WTC11 (cell line): ENCODE measurements at regions of chr7 and their contacts with region 1.

Region 1: GRCh38 chr7:130205084-130205947 is at the start of gene TMEM209:
- DNase-seq: peak; percentile 97
- ATAC-seq: peak; percentile 98
- H3K4me3 Mint-ChIP-seq: peak within 1 kb of the TSS; percentile 92
- H3K27ac Mint-ChIP-seq: peak within 1 kb of the TSS; percentile 98
- H3K4me1 Mint-ChIP-seq: 0 out of 2 replicates have a peak, but pooled peaks cover 3% of the 10 kb centered on the region
- H3K27me3 Mint-ChIP-seq: no peaks in the 10 kb centered on the region
- CTCF ChIP-seq: no peak
- total RNA-seq, gene TMEM209: 21.0 to 25.8 TPM (median 23.5 TPM) in 3 replicates

Region 2: GRCh38 chr7:130069978-130070860 is 135.1 kb before region 1 on chr7 and contains the start of gene KLHDC10:
- CTCF ChIA-PET with region 1: interaction called, 13 read pairs
- POLR2A ChIA-PET with region 1: interaction called, 4 read pairs
- DNase-seq: peak; percentile 95
- ATAC-seq: peak; percentile 92
- H3K4me3 Mint-ChIP-seq: peak within 1 kb of the TSS; percentile 93
- H3K27ac Mint-ChIP-seq: peak within 1 kb of the TSS; percentile 94
- H3K4me1 Mint-ChIP-seq: peaks cover 25% of the 10 kb centered on the region
- H3K27me3 Mint-ChIP-seq: no peaks in the 10 kb centered on the region
- CTCF ChIP-seq: no peak
- total RNA-seq, gene KLHDC10: 14.4 to 16.5 TPM (median 15.0 TPM) in 3 replicates

Region 3: GRCh38 chr7:130135208-130136205 is 69.8 kb before region 1 on chr7:
- CTCF ChIA-PET with region 1: no interaction called
- POLR2A ChIA-PET with region 1: no interaction called
- DNase-seq: no peak
- ATAC-seq: no peak
- H3K4me3 Mint-ChIP-seq: no peak overlapping the region
- H3K27ac Mint-ChIP-seq: no peak overlapping the region
- H3K4me1 Mint-ChIP-seq: peaks cover 24% of the 10 kb centered on the region
- H3K27me3 Mint-ChIP-seq: peaks cover 8% of the 10 kb centered on the region
- CTCF ChIP-seq: no peak

Region 4: DNA sequence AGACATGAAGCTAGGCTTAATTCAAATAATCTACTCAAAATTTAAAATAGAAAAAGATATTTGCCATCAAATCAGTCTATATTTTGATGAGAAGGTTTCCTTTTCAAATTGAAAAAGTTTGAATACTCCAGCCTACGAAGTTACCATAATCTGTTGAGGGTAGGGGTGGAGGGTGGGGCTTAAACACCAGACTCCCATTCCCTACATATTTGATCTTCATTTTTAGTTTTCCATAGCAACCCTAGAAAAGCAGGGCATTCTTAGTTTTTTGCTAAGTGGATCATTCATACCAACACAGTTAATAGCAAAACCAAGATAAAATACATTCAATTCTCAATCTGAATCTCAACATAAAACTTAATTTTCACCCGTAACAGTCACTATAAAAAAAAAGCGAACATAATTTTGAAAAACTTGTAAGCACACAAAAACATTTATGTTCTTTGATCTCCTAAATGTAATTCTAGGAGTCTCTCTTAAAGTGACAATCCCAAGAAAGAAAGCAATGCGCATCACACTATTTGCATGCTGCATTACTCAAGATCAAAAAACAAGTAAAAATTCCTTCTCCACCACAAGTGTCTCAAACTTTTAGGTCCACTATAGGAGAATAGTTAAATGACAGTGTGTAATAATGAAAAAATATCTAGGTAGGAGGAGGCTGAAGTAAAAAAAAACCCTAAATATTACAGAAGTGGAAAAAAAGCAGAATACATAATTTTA is 30.9 kb before region 1 on chr7:
- CTCF ChIA-PET with region 1: no interaction called
- POLR2A ChIA-PET with region 1: no interaction called
- DNase-seq: no peak
- ATAC-seq: no peak
- H3K4me3 Mint-ChIP-seq: no peak overlapping the region
- H3K27ac Mint-ChIP-seq: no peak overlapping the region
- H3K4me1 Mint-ChIP-seq: no peaks in the 10 kb centered on the region
- H3K27me3 Mint-ChIP-seq: no peaks in the 10 kb centered on the region
- CTCF ChIP-seq: no peak

Region 5: DNA sequence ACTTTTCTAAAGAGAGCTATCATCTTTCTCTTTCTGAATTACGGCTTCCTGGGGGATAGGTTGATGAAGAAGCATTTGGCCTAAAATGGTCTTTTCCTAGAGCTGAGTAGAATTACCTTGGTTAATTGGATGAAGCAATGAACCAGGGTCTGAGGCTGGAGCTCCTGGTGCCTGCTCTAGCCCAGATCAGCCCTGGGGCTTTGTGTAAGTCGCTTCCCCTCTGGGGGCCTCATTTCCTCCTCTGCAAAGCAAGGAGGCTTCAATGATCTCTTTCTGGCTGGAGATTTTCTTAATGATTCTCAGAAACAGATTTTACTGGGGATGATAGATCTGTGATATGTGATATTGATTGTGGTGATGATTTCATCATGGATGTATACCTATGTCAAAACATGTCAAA is 57.8 kb after region 1 on chr7:
- CTCF ChIA-PET with region 1: no interaction called
- POLR2A ChIA-PET with region 1: no interaction called
- DNase-seq: no peak
- ATAC-seq: peak; percentile 48; the same call in 1 of the 2 replicates
- H3K4me3 Mint-ChIP-seq: no peak overlapping the region
- H3K27ac Mint-ChIP-seq: no peak overlapping the region
- H3K4me1 Mint-ChIP-seq: peaks cover 40% of the 10 kb centered on the region
- H3K27me3 Mint-ChIP-seq: peaks cover 13% of the 10 kb centered on the region
- CTCF ChIP-seq: no peak

Region 6: DNA sequence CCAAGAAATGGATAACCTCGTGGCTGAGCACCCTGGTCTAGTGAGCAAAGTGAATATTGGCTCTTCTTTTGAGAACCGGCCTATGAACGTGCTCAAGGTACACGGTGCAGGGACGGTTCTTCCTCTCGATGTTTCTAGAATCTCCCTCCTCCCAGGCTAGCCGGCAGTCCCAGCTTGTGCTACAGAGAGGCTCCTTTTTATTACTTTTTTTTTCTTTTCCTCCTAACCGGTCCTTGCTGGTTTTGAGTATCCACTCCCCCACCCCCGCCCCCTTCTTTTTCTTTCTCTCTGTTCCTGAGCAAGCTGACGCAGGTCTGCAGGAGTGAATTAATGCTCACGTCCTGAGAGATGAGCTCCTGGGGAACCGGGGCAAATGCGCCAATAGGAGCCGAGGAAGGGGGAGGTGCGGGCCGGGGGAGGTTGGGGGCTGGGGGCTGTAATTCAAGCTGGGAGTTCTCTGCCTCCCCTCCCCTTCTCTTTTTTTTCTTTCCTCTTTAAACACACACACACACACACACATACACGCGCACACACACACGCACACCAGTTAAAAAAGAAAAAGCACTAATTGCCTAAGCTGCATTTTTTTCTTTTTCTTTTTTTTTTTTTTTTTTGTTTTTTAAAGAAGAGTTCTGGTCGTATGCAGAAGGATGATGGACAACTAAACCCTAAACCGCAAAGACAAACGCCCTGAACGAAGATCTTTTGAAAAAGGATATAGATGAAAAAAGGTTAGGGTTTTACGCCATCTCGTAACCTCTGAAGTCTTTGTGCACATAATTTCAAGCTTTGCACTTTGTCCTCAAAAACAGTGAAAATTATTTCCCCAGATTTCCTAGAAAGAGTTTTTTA is 68.0 kb after region 1 on chr7:
- CTCF ChIA-PET with region 1: no interaction called
- POLR2A ChIA-PET with region 1: interaction called, 10 read pairs
- DNase-seq: peak; percentile 84
- ATAC-seq: peak; percentile 83
- H3K4me3 Mint-ChIP-seq: peak overlapping the region; percentile 59
- H3K27ac Mint-ChIP-seq: peak overlapping the region; percentile 98
- H3K4me1 Mint-ChIP-seq: peaks cover 69% of the 10 kb centered on the region
- H3K27me3 Mint-ChIP-seq: peaks cover 10% of the 10 kb centered on the region
- CTCF ChIP-seq: no peak

Region 7: GRCh38 chr7:130379921-130380860 is 174.9 kb after region 1 on chr7 and contains the start of gene CPA1:
- CTCF ChIA-PET with region 1: interaction called, 10 read pairs
- POLR2A ChIA-PET with region 1: interaction called, 3 read pairs
- DNase-seq: no peak
- ATAC-seq: no peak
- H3K4me3 Mint-ChIP-seq: no peak within 1 kb of the TSS
- H3K27ac Mint-ChIP-seq: no peak within 1 kb of the TSS
- H3K4me1 Mint-ChIP-seq: peaks cover 6% of the 10 kb centered on the region
- H3K27me3 Mint-ChIP-seq: peaks cover 8% of the 10 kb centered on the region
- CTCF ChIP-seq: no peak
- total RNA-seq, gene CPA1: 7.9 to 14.0 TPM (median 8.9 TPM) in 3 replicates